Activated CD4-positive, alpha-beta T cell treated with anti-CD3 and anti-CD28 coated beads, Interleukin-2, amount 10 ng/mL, durations not matched to agents 24 days and 14 days (primary cell): ENCODE measurements at regions of chr3 and their contacts with region 1.

Region 1: DNA sequence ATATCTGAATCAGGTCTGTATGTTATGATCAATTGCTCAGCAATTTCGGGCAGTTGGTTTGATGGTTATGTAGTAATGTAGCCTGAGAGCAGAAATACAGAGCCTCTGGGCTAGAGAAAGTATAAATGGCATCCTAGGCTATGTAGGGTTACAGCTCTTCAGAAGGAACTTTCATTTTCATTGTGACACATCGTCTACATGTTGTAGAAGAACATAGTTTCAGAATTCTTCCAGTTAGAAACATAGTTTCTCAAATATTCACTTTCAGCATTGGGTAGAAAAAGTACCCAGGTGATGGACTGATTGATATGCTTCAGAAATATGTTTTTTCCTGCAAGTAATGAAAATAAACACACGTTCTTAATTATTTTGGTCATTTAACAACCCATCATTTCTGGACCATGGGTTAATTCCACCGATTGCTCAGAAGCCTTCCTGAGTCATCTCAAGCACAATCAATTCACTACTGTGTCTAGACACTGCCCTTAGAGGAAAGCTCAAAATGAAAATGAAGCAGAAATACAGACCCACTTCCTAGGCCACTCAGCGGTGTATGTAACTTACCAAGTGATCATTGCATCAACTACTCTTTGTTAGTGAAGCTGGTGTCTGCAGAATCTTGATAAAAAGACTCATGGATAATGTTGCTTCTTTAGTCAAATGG is 88.8 kb upstream of the TSEN2 start:
- DNase-seq: peak; percentile 67
- H3K4me3 Mint-ChIP-seq: peak overlapping the region; percentile 45
- H3K27ac Mint-ChIP-seq: peak overlapping the region; percentile 73
- H3K4me1 Mint-ChIP-seq: peaks cover 9% of the 10 kb centered on the region
- H3K27me3 Mint-ChIP-seq: peaks cover 11% of the 10 kb centered on the region

Region 2: GRCh38 chr3:12308517-12308916 is 87.0 kb before region 1 on chr3:
- intact Hi-C with region 1: loop called (anchors 5 kb)
- DNase-seq: no peak
- H3K4me3 Mint-ChIP-seq: no peak overlapping the region
- H3K27ac Mint-ChIP-seq: peak overlapping the region; percentile 6
- H3K4me1 Mint-ChIP-seq: peaks cover 17% of the 10 kb centered on the region
- H3K27me3 Mint-ChIP-seq: peaks cover 26% of the 10 kb centered on the region

Region 3: DNA sequence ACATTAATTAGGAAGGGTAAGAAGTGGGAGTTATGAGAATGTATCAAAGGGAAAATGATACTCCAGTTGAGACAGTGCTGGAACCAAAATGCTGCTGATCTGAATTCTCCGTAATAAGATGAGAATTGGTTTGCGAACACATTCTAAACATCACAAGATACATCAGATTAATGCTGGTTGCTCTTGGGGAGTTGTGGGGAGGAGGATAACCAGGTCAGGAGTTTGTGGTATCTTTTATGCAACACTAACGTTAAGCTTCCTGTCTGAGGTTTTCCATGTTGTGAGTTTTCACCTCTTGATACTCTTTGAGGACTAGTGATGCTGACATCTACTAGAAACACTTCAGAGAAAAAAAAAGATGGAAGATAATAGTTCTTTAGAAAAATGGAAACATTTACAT is 59.4 kb before region 1 on chr3:
- intact Hi-C with region 1: loop called (anchors 5 kb)
- DNase-seq: peak; percentile 65
- H3K4me3 Mint-ChIP-seq: peak overlapping the region; percentile 22
- H3K27ac Mint-ChIP-seq: peak overlapping the region; percentile 59
- H3K4me1 Mint-ChIP-seq: peaks cover 16% of the 10 kb centered on the region
- H3K27me3 Mint-ChIP-seq: peaks cover 3% of the 10 kb centered on the region

Region 4: GRCh38 chr3:12415014-12415680 is 19.7 kb after region 1 on chr3:
- intact Hi-C with region 1: loop called (anchors 1 kb)
- DNase-seq: no peak
- H3K4me3 Mint-ChIP-seq: no peak overlapping the region
- H3K27ac Mint-ChIP-seq: no peak overlapping the region
- H3K4me1 Mint-ChIP-seq: peaks cover 4% of the 10 kb centered on the region
- H3K27me3 Mint-ChIP-seq: peaks cover 14% of the 10 kb centered on the region

Region 5: DNA sequence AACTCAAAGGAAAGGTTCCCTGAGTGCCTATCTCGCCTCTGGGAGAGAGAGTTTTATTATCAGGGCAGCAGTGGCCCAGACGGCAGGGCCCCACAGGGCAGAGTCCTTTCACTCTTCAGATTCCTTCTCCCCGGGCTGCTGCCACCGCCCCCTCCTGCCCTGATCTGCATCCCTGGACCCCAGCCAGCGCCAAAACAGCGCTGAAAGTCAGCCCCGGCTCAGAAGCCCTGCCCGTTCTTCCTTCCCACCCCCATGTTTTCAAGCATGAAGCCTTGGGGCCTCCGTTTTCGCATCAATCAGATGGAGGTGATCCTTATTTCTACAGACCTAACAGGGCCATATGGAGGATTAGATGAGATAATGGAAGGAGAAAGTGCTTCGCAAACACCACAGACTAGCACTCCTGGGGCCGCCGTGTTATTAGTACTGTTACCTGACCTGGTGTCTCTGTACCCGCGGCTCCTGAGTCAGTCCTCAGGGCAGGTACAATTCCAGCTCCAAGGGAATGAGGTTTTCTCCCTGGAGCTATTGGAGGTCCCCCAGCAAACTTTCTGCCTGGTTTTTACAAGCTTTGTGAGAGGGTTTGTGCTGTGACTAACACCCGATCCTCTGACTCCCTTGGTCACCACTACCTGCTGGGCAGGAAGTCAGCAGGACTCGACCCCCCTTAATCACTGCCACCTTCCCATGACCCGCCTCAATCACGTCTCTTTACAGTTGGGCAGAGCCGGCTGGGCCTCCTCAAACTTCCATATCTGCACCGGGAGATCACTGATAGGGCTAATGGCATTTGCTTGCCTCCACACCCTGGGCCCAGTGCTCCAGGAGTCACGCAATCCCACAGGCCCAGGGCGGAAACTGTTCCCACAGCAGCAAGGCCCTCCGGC is 49.3 kb after region 1 on chr3:
- intact Hi-C with region 1: no loop called
- DNase-seq: no peak
- H3K4me3 Mint-ChIP-seq: no peak overlapping the region
- H3K27ac Mint-ChIP-seq: no peak overlapping the region
- H3K4me1 Mint-ChIP-seq: no peaks in the 10 kb centered on the region
- H3K27me3 Mint-ChIP-seq: no peaks in the 10 kb centered on the region